CD8-positive, alpha-beta T cell (primary cell): ENCODE measurements at regions of chr1 and their contacts with region 1.

Region 1: GRCh38 chr1:11805447-11806306 is at the starts of genes CLCN6 and MTHFR:
- DNase-seq: peak; percentile 93 to 99 (median 97)
- ATAC-seq: peak; percentile 85
- H3K4me3 ChIP-seq: peak within 1 kb of the TSS; percentile 73 to 96
- H3K4me3 Mint-ChIP-seq: peak within 1 kb of the TSS; percentile 99
- H3K27ac ChIP-seq: peak within 1 kb of the TSS; percentile 80 to 86
- H3K27ac Mint-ChIP-seq: peak within 1 kb of the TSS; percentile 98
- H3K4me1 ChIP-seq: peaks cover 48% of the 10 kb centered on the region
- H3K4me1 Mint-ChIP-seq: peaks cover 63% of the 10 kb centered on the region
- H3K27me3 ChIP-seq: no peaks in the 10 kb centered on the region
- H3K27me3 Mint-ChIP-seq: no peaks in the 10 kb centered on the region
- CTCF ChIP-seq: no peak
- total RNA-seq, gene CLCN6: 14.8 to 18.5 TPM
- total RNA-seq, gene MTHFR: 27.3 to 27.5 TPM

Region 2: GRCh38 chr1:11012250-11013171 is 793.2 kb before region 1 on chr1 and contains the start of gene TARDBP:
- CTCF ChIA-PET with region 1: no interaction called
- POLR2A ChIA-PET with region 1: no interaction called
- intact Hi-C with region 1: loop called (anchors 5 kb)
- DNase-seq: peak; percentile 82 to 95 (median 90)
- ATAC-seq: peak; percentile 87
- H3K4me3 ChIP-seq: peak within 1 kb of the TSS; percentile 78 to 94
- H3K4me3 Mint-ChIP-seq: peak within 1 kb of the TSS; percentile 92
- H3K27ac ChIP-seq: peak within 1 kb of the TSS; percentile 95 to 97
- H3K27ac Mint-ChIP-seq: peak within 1 kb of the TSS; percentile 97
- H3K4me1 ChIP-seq: peaks cover 38% of the 10 kb centered on the region
- H3K4me1 Mint-ChIP-seq: peaks cover 36% of the 10 kb centered on the region
- H3K27me3 ChIP-seq: no peaks in the 10 kb centered on the region
- H3K27me3 Mint-ChIP-seq: no peaks in the 10 kb centered on the region
- CTCF ChIP-seq: no peak
- total RNA-seq, gene TARDBP: 125 to 131 TPM

Region 3: GRCh38 chr1:11645670-11646265 is 159.9 kb before region 1 on chr1:
- CTCF ChIA-PET with region 1: interaction called, 4 read pairs
- POLR2A ChIA-PET with region 1: interaction called, 4 read pairs
- intact Hi-C with region 1: loop called in 1 of 2 experiments (anchors 5 kb)
- DNase-seq: peak; percentile 57 to 85 (median 81)
- ATAC-seq: peak; percentile 47
- H3K4me3 ChIP-seq: no peak overlapping the region
- H3K4me3 Mint-ChIP-seq: no peak overlapping the region
- H3K27ac ChIP-seq: no peak overlapping the region
- H3K27ac Mint-ChIP-seq: no peak overlapping the region
- H3K4me1 ChIP-seq: peaks cover 17% of the 10 kb centered on the region
- H3K4me1 Mint-ChIP-seq: peaks cover 15% of the 10 kb centered on the region
- H3K27me3 ChIP-seq: no peaks in the 10 kb centered on the region
- H3K27me3 Mint-ChIP-seq: no peaks in the 10 kb centered on the region
- CTCF ChIP-seq: peak; percentile 85

Region 4: DNA sequence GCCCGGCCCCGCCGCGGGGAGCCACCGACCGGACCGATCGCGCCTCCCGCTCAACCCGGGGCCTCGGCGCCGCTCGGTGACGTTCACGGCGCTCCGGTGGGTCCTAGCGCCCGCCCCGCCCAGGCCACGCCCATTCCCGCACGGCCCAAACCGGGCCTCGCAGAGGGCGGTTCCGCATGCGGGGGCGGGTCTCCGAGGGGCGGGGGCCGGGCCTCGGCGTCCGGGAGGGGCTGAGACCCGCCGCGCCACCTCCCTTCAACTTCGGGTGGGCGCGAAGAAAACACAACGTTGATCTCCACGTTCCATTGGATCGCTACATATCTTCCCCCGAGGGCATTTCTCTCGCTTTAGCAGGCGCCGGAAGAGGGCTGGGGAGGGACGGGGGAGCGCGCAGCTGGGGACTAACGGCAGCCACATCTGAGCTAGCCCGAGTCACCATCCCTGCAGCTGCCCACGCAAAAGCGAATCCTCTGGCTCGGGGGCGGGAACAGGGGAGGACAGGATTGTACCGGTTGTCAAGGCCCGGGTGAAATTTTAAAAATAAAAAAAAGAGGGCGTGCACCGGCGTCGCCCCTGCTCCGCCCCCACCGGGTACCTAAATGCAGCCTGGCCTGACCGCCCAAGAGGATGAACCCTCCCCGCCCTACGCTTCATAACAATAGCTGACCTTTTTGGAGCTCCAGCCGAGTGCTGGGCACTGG is 124.5 kb before region 1 on chr1 and contains the start of gene MAD2L2:
- CTCF ChIA-PET with region 1: no interaction called
- POLR2A ChIA-PET with region 1: no interaction called
- intact Hi-C with region 1: loop called (anchors 1 to 5 kb)
- DNase-seq: peak; percentile 75 to 93 (median 91)
- ATAC-seq: peak; percentile 91
- H3K4me3 ChIP-seq: peak within 1 kb of the TSS; percentile 91 to 95
- H3K4me3 Mint-ChIP-seq: peak within 1 kb of the TSS; percentile 89
- H3K27ac ChIP-seq: peak within 1 kb of the TSS; percentile 54 to 69
- H3K27ac Mint-ChIP-seq: peak within 1 kb of the TSS; percentile 91
- H3K4me1 ChIP-seq: peaks cover 14% of the 10 kb centered on the region
- H3K4me1 Mint-ChIP-seq: peaks cover 18% of the 10 kb centered on the region
- H3K27me3 ChIP-seq: peaks cover 0 to 2% of the 10 kb centered on the region in 2 experiments
- H3K27me3 Mint-ChIP-seq: peaks cover 4% of the 10 kb centered on the region
- CTCF ChIP-seq: no peak
- total RNA-seq, gene MAD2L2: 28.7 to 29.4 TPM

Region 5: GRCh38 chr1:11761988-11762406 is 43.7 kb before region 1 on chr1 and contains the start of gene C1orf167:
- CTCF ChIA-PET with region 1: no interaction called
- POLR2A ChIA-PET with region 1: no interaction called
- intact Hi-C with region 1: no loop called
- DNase-seq: peak in 4 of 9 experiments; percentile 10 to 59 (median 46)
- ATAC-seq: no peak
- H3K4me3 ChIP-seq: peak within 1 kb of the TSS in 1 of 2 experiments; percentile 22
- H3K4me3 Mint-ChIP-seq: peak within 1 kb of the TSS; percentile 18
- H3K27ac ChIP-seq: no peak within 1 kb of the TSS
- H3K27ac Mint-ChIP-seq: no peak within 1 kb of the TSS
- H3K4me1 ChIP-seq: peaks cover 9% of the 10 kb centered on the region
- H3K4me1 Mint-ChIP-seq: peaks cover 2% of the 10 kb centered on the region
- H3K27me3 ChIP-seq: peaks cover 0 to 10% of the 10 kb centered on the region in 2 experiments
- H3K27me3 Mint-ChIP-seq: peaks cover 20% of the 10 kb centered on the region
- CTCF ChIP-seq: no peak
- total RNA-seq, gene C1orf167: not detected

Region 6: GRCh38 chr1:11784993-11785769 is 20.5 kb before region 1 on chr1:
- CTCF ChIA-PET with region 1: interaction called, 3 read pairs
- POLR2A ChIA-PET with region 1: interaction called, 7 read pairs
- intact Hi-C with region 1: loop called in 1 of 2 experiments (anchors 2 kb)
- DNase-seq: peak in 7 of 9 experiments; percentile 22 to 68 (median 44)
- ATAC-seq: peak; percentile 54
- H3K4me3 ChIP-seq: peak overlapping the region; percentile 33 to 45
- H3K4me3 Mint-ChIP-seq: peak overlapping the region; percentile 54
- H3K27ac ChIP-seq: no peak overlapping the region
- H3K27ac Mint-ChIP-seq: no peak overlapping the region
- H3K4me1 ChIP-seq: peaks cover 12% of the 10 kb centered on the region
- H3K4me1 Mint-ChIP-seq: peaks cover 8% of the 10 kb centered on the region
- H3K27me3 ChIP-seq: no peaks in the 10 kb centered on the region
- H3K27me3 Mint-ChIP-seq: no peaks in the 10 kb centered on the region
- CTCF ChIP-seq: peak; percentile 78

Region 7: DNA sequence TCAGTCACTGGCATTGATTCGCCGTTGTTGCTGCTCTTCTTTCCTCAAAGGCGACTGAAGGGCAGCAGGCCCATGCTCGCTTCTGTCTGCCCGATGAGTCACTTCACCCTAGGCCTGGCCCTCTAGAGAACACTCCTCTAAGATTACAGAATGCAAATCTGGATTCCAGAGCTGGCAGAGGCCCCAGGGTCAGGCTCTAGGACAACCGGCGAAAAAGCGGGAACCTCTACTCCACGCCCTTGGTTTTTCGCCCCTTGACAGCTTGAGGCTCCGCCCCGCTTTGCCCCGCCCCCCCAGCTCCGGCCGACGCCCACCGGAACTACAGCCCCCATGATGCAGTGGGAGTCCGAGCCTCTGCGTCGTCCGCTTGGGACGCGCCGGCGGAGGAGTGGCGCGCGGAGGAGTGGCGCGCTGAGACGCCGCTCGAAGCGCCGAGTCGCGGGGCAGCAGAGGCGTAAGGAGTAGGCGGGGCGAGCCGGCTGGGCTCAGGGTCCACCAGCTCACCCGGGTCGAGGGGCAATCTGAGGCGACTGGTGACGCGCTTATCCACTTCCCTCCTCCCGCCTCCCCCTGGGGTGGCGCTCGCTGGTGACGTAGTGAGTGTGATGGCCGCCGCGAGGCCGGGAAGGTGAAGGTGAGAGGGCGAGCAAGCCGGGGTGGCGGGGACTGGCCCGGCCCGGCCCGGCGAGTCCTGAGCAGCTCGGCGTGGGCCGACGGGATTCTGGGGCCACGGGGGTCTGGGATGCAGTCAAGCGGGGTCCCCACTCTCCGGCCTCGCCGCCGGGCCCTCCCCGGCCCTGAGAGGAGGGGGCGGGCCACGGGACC is 174.4 kb after region 1 on chr1 and contains the start of gene MFN2:
- CTCF ChIA-PET with region 1: no interaction called
- POLR2A ChIA-PET with region 1: no interaction called
- intact Hi-C with region 1: loop called (anchors 1 kb)
- DNase-seq: peak; percentile 87 to 97 (median 92)
- ATAC-seq: peak; percentile 89
- H3K4me3 ChIP-seq: peak within 1 kb of the TSS; percentile 70 to 94
- H3K4me3 Mint-ChIP-seq: peak within 1 kb of the TSS; percentile 89
- H3K27ac ChIP-seq: peak within 1 kb of the TSS; percentile 91 to 95
- H3K27ac Mint-ChIP-seq: peak within 1 kb of the TSS; percentile 95
- H3K4me1 ChIP-seq: peaks cover 23% of the 10 kb centered on the region
- H3K4me1 Mint-ChIP-seq: peaks cover 43% of the 10 kb centered on the region
- H3K27me3 ChIP-seq: no peaks in the 10 kb centered on the region
- H3K27me3 Mint-ChIP-seq: no peaks in the 10 kb centered on the region
- CTCF ChIP-seq: no peak
- total RNA-seq, gene MFN2: 41.7 to 46.0 TPM